ENCODE measurements at regions of chr19 and their contacts with region 1.

Region 1: GRCh38 chr19:49929611-49930482 is 543 bp upstream of the NUP62 start:
- DNase-seq: peak; percentile 99
- H3K4me3 ChIP-seq: peak overlapping the region; percentile 98
- H3K27ac ChIP-seq: peak overlapping the region; percentile 87
- H3K4me1 ChIP-seq: peaks cover 7% of the 10 kb centered on the region; the same call in 1 of the 2 replicates
- H3K27me3 ChIP-seq: no peaks in the 10 kb centered on the region

Region 2: DNA sequence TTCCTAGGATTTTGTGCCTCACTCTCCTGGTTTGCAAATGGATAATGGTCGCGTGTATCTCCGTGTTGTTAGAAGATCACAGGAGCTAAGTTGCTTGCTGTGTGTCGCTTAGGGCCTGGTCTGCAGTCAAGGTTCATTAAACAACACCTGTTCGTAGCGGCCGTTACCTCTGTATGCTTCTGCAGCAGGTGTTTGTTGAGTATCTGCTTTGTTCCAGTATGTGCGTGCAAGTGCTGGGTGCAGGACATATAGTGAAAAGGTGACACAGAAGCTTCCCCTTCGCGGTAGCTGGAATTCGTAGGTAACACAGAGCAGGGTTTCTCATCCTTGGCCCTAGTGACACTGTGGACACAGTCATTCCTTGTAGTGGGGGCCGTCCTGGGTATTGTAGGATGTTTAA is 106.4 kb before region 1 on chr19:
- in situ Hi-C with region 1: no loop called
- DNase-seq: no peak
- H3K4me3 ChIP-seq: no peak overlapping the region
- H3K27ac ChIP-seq: no peak overlapping the region
- H3K4me1 ChIP-seq: peaks cover 6% of the 10 kb centered on the region; the same call in 1 of the 2 replicates
- H3K27me3 ChIP-seq: no peaks in the 10 kb centered on the region

Region 3: GRCh38 chr19:50147462-50148423 is 217.9 kb after region 1 on chr19:
- in situ Hi-C with region 1: loop called (anchors 25 kb)
- DNase-seq: peak; percentile 89
- H3K4me3 ChIP-seq: peak overlapping the region; percentile 76
- H3K27ac ChIP-seq: no peak overlapping the region
- H3K4me1 ChIP-seq: no peaks in the 10 kb centered on the region
- H3K27me3 ChIP-seq: no peaks in the 10 kb centered on the region

Measured in GM23248 (cell line).